Right ventricle myocardium superior (tissue), 1 donor: ENCODE measurements at regions of chr5 and their contacts with region 1.

Region 1: DNA sequence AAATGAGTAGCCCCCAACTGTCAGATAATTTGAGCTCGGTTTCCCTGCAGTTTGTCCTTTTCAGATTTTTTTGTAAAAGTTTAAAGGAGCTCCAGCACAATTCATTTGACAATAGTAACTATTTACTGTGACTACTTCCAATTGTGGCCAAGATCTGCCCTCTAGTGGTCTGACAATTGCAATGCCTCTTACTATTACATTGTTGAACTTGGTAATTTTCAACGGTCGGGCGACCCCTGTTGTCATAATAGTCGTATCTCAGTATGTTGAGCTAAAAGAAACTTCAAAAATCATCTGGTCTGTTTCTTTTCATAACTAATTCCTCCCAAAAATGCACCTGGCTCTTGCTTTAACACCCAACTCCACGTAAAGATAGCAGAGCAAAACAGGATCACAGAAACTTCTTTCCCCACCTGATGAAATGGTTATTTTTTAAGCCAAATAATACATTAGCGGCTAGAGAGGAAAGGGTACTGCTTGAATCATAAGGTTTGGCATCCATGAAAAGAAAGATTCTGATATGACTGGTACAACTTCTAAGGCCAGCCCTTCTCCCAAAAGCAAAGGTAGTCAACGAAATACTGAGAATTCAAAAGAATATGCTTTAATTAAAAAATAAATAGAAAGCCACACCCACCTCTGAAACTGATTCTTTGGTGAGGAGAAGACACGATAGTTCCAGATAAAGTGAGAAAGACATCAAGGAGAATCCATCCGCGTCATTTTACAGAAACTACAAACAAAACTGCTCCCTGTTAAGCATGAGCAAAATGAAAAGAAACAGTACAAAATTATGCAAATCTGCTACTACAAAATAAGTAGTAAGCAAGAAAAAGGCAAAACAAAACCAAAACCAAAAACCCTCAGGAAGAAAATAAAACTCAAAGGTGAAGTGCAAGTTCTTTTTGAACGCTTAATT is 76.9 kb upstream of the HTR4 start:
- DNase-seq: peak; percentile 60
- ATAC-seq: peak; percentile 91

Region 2: DNA sequence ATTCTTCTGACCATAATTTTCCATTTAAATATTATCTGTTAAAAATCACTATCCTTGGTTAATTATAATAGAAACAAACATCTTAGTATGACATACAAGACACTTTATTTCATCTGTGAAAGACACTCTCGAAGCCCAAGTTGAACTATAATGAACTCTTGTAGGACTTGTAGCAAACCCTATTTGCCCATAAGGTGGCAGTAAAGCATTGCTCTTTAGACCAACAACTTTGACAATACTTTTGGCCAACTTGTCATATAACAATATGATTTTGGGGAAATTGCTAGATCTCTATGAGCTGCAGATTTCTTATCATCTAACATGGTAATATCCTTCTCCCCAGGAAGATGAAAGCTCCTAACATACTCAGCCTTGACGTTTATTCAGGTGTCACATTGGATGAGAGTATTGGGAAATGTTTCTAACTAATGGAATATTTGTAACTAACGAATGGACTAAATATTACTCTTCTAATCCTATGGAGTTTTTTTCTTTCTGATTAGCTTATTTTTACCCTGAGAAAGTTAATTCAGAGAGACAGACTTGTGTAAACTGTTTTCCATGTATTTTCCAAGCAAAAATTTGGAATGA is 551.9 kb before region 1 on chr5:
- intact Hi-C with region 1: loop called (anchors 2 kb)
- DNase-seq: no peak
- ATAC-seq: peak; percentile 78

Region 3: DNA sequence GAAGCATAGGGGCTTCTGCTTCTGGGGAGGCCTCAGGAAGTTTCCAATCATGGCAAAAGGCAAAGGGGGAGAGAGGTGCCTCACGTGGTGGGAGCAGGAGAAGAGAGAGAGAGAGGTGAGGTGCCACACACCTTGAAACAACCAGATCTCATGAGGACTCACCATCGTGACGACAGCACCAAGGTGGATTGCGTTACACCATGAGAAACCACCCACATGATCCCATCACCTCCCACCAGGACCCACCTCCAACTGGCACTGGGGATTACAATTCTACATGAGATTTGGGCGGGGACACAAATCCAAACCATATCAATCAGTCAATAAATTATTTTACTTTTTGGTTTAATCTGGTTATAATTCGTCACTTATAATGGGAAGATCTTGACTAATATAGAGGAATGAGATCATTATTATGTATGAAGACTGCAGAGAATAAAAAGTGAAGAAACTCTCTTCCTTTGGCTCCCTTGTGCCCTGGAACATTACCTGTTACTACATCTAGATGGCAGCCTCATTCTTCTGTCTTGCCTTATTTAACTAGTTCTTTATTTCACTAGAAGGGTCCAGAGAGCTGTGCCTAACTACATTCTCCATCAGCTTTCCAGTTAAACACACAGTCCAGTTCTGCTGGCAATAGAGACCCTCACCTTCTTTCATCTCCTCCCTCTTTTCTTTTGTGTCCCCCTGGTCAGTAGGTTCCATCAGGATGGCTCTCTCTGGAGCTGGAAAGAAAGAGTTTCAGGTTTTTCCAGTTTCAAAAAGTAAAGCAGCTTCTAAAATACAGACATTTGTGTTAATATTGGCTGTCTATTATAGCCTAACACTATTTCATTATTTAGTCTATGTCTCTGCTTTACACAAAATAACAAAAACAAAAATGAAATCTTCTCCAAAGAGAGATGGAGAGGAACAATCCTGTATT is 440.7 kb before region 1 on chr5:
- intact Hi-C with region 1: loop called (anchors 10 kb)
- DNase-seq: no peak
- ATAC-seq: no peak

Region 4: GRCh38 chr5:148443998-148444397 is 287.2 kb before region 1 on chr5:
- intact Hi-C with region 1: loop called (anchors 5 kb)
- DNase-seq: no peak
- ATAC-seq: peak; percentile 84

Region 5: GRCh38 chr5:148834689-148835088 is 103.5 kb after region 1 on chr5:
- intact Hi-C with region 1: no loop called
- DNase-seq: no peak
- ATAC-seq: no peak

Region 6: DNA sequence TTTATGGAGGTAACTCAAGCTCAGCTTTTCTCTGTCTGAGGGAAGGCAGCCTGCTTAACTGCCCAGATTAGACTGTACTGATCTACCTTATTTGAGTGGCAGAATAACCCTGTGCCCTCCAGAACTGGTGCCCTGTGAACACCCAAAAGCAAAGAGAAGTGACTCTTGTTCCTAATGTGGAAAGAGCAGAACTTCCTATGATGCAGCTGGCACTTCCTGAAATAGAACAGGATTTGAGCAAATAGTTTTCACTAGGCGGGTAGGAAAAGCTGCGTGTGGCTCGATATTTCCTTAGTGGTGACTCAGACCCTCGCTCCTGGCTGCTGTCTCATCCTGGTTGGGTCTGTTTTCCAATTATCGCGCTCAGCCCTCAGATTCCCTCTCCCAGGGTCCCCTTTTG is 241.8 kb after region 1 on chr5:
- intact Hi-C with region 1: no loop called
- DNase-seq: no peak
- ATAC-seq: peak; percentile 47

Region 7: GRCh38 chr5:149035372-149035790 is 304.2 kb after region 1 on chr5:
- intact Hi-C with region 1: loop called (anchors 2 kb)
- DNase-seq: peak; percentile 81
- ATAC-seq: peak; percentile 89

Region 8: GRCh38 chr5:149114403-149115312 is 383.5 kb after region 1 on chr5:
- intact Hi-C with region 1: loop called (anchors 5 kb)
- DNase-seq: no peak
- ATAC-seq: peak; percentile 98